GM10248 (cell line): ENCODE measurements at regions of chr17 and their contacts with region 1.

Region 1: GRCh38 chr17:79810130-79811010 is 13.5 kb upstream of the CBX8 start:
- DNase-seq: peak; percentile 90
- CTCF ChIP-seq: no peak

Region 2: GRCh38 chr17:79721993-79722671 is 88.2 kb before region 1 on chr17:
- CTCF ChIA-PET with region 1: no interaction called
- POLR2A ChIA-PET with region 1: no interaction called
- DNase-seq: no peak
- CTCF ChIP-seq: no peak

Region 3: DNA sequence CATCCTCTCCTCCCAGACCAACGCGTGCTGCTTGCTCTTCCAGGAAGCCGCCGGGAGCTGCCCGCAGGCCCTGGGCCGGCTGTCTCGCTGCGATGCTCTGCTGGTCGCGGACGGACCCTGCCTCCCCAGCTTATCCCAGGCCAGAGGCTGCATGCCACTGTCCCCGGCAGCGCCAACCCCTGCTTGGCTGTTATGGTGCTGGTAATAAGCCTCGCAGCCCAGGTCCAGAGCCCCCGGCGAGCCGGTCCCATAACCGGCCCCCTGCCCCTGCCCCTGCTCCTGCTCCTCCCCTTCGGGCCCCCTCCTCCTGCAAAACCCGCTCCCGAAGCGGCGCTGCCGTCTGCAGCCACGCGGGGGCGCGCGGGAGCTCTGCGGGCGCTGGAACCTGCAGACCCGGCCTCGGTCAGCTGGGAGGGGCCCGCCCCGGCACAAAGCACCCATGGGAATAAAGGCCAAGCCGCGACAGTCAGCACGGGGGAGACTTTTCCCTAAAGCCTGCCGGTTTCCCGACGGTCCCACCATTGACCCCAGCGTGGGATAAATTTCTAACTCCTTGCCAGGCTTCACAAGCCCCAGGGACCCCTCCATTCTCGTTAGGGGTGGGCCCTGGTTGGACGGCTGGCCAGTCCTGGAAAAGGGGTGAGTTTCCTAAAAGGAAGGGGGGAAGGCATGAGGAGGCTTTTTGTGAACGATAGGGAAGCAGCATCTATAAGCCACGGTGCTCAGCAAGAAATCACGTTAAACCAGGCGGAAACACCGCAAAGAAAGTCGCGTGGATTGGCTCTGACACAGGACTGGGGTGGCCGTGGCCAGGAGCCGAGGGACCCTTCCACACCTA is 68.4 kb before region 1 on chr17:
- CTCF ChIA-PET with region 1: interaction called, 10 read pairs
- POLR2A ChIA-PET with region 1: no interaction called
- DNase-seq: peak; percentile 85
- CTCF ChIP-seq: peak; percentile 99

Region 4: GRCh38 chr17:79796763-79797491 is 13.4 kb before region 1 on chr17 and contains the start of gene CBX8:
- CTCF ChIA-PET with region 1: interaction called, 13 read pairs
- POLR2A ChIA-PET with region 1: no interaction called
- DNase-seq: peak; percentile 100
- CTCF ChIP-seq: peak; percentile 18

Region 5: GRCh38 chr17:79970576-79971068 is 160.3 kb after region 1 on chr17:
- CTCF ChIA-PET with region 1: interaction called, 10 read pairs
- POLR2A ChIA-PET with region 1: no interaction called
- DNase-seq: no peak
- CTCF ChIP-seq: peak; percentile 25

Region 6: DNA sequence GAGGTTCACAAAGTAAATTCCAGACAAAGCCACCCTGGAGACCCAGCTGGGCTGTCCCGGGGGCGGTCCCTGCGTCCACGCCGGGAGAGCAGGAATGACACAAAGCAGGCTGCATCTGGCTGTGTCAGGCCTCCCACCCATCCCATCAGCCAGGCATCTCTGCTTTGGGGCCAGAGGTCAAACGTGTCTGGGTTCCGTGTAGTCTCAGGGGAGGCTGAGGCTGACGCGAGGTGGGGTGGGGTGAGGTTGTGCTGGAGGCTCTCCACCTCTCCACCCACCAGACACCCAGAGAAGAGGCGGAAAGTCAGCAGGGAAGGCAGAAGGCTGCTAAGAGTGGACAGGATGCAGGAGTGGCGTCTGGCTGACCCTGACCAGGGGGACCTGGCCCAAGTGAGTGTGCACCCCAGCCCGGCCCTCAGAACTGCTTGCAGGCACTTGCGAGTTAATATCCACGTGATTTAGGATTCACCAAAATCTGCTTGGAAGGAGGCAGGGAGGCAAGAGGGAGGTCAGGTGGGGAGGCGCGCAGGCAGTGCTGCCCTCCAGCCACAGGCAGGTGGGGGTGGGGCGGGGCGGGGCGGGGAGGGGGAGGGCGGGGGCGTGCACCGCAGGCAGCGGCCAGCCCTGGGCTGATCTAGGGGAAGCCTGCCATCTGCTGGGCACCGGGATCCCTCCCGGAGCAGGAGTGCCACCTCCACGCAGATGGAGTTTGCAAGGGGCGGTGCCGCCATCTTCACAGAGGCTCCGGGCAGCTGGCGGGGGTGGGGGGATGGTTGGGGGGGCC is 181.0 kb after region 1 on chr17:
- CTCF ChIA-PET with region 1: no interaction called
- POLR2A ChIA-PET with region 1: no interaction called
- DNase-seq: peak; percentile 76
- CTCF ChIP-seq: peak; percentile 55